Colonic mucosa (tissue), 4 donors: ENCODE measurements at regions of chr17 and their contacts with region 1.

Region 1: GRCh38 chr17:78112518-78113226 is 15.9 kb downstream of the TMC6 start:
- DNase-seq: peak; percentile 86
- H3K4me3 ChIP-seq: no peak overlapping the region
- H3K27ac ChIP-seq: no peak overlapping the region
- H3K4me1 ChIP-seq: no peaks in the 10 kb centered on the region
- H3K27me3 ChIP-seq: no peaks in the 10 kb centered on the region
- CTCF ChIP-seq: peak; percentile 99

Region 2: GRCh38 chr17:77863814-77864161 is 248.9 kb before region 1 on chr17:
- intact Hi-C with region 1: no loop called
- DNase-seq: peak; percentile 80
- H3K4me3 ChIP-seq: no peak overlapping the region
- H3K27ac ChIP-seq: peak overlapping the region; percentile 67
- H3K4me1 ChIP-seq: peaks cover 13% of the 10 kb centered on the region
- H3K27me3 ChIP-seq: no peaks in the 10 kb centered on the region
- CTCF ChIP-seq: no peak

Region 3: DNA sequence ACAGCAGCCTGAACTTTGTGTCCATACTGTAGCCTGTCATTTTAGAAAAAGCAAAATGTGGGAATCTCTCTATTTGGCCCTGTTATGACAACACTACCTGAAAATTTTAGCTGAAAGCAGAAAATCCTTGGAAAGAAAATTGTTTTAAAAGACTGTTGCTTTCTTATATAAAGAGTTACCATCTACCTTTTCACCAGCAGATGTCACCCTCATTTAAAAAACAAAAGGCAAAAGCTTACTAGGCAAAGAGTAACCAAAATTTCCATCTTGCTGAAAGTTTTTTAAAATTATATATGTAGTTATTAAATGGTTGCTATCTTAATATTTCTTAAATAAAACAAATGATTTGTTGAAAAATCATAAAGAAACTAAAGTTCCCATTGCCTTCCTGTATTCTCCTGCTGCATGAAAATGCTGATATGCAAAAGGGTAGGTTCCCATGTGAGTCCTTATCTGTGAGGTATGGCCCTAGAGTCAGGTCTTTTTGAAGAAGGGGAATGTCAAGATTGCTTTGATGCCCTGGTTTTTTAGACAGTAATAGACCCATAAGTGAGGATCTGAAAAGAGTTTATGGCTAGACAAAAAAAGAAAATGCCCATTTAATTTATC is 93.2 kb before region 1 on chr17:
- intact Hi-C with region 1: no loop called
- DNase-seq: no peak
- H3K4me3 ChIP-seq: no peak overlapping the region
- H3K27ac ChIP-seq: no peak overlapping the region
- H3K4me1 ChIP-seq: no peaks in the 10 kb centered on the region
- H3K27me3 ChIP-seq: no peaks in the 10 kb centered on the region
- CTCF ChIP-seq: peak; percentile 42

Region 4: GRCh38 chr17:78176548-78177025 is 63.9 kb after region 1 on chr17:
- intact Hi-C with region 1: loop called (anchors 5 kb)
- DNase-seq: peak; percentile 84
- H3K4me3 ChIP-seq: no peak overlapping the region
- H3K27ac ChIP-seq: peak overlapping the region; percentile 28
- H3K4me1 ChIP-seq: peaks cover 53% of the 10 kb centered on the region
- H3K27me3 ChIP-seq: no peaks in the 10 kb centered on the region
- CTCF ChIP-seq: peak; percentile 96

Region 5: GRCh38 chr17:78250891-78251794 is 138.5 kb after region 1 on chr17:
- intact Hi-C with region 1: loop called (anchors 2 kb)
- DNase-seq: peak; percentile 85
- H3K4me3 ChIP-seq: no peak overlapping the region
- H3K27ac ChIP-seq: peak overlapping the region; percentile 62
- H3K4me1 ChIP-seq: peaks cover 12% of the 10 kb centered on the region
- H3K27me3 ChIP-seq: no peaks in the 10 kb centered on the region
- CTCF ChIP-seq: peak; percentile 100